H1 (cell line): ENCODE measurements at regions of chr20 and their contacts with region 1.

Region 1: GRCh38 chr20:36835453-36836198 is 40.3 kb upstream of the TLDC2 start:
- DNase-seq: peak; percentile 76 to 87
- H3K4me3 ChIP-seq: peak overlapping the region; percentile 1 to 52 (median 18); a peak in 4 of 8 replicates
- H3K27ac ChIP-seq: peak overlapping the region; percentile 52; the same call in 1 of the 2 replicates
- H3K4me1 ChIP-seq: peaks cover 0 to 7% (median 4%) of the 10 kb centered on the region in 4 experiments; a peak in 4 of 7 replicates
- H3K27me3 ChIP-seq: no peaks in the 10 kb centered on the region
- CTCF ChIP-seq: no peak
- EP300 ChIP-seq: no peak
- POLR2A ChIP-seq: peak in 1 of 2 experiments; percentile 82; a peak in 2 of 3 replicates
- RAD21 ChIP-seq: no peak

Region 2: GRCh38 chr20:36815454-36816091 is 20.1 kb before region 1 on chr20:
- CTCF ChIA-PET with region 1: interaction called, 19 read pairs
- POLR2A ChIA-PET with region 1: interaction called, 3 read pairs
- DNase-seq: no peak
- H3K4me3 ChIP-seq: no peak overlapping the region
- H3K27ac ChIP-seq: no peak overlapping the region
- H3K4me1 ChIP-seq: peaks cover 3 to 6% (median 5%) of the 10 kb centered on the region in 4 experiments; a peak in 5 of 7 replicates
- H3K27me3 ChIP-seq: no peaks in the 10 kb centered on the region
- CTCF ChIP-seq: peak; percentile 27 to 38 (median 37)
- EP300 ChIP-seq: no peak
- POLR2A ChIP-seq: no peak
- RAD21 ChIP-seq: peak; percentile 56 to 62

Region 3: GRCh38 chr20:36847009-36847709 is 11.5 kb after region 1 on chr20:
- CTCF ChIA-PET with region 1: interaction called, 45 read pairs
- POLR2A ChIA-PET with region 1: interaction called, 42 read pairs
- DNase-seq: no peak
- H3K4me3 ChIP-seq: no peak overlapping the region
- H3K27ac ChIP-seq: no peak overlapping the region
- H3K4me1 ChIP-seq: peaks cover 0 to 7% (median 4%) of the 10 kb centered on the region in 4 experiments; a peak in 4 of 7 replicates
- H3K27me3 ChIP-seq: no peaks in the 10 kb centered on the region
- CTCF ChIP-seq: no peak
- EP300 ChIP-seq: no peak
- POLR2A ChIP-seq: no peak
- RAD21 ChIP-seq: no peak

Region 4: DNA sequence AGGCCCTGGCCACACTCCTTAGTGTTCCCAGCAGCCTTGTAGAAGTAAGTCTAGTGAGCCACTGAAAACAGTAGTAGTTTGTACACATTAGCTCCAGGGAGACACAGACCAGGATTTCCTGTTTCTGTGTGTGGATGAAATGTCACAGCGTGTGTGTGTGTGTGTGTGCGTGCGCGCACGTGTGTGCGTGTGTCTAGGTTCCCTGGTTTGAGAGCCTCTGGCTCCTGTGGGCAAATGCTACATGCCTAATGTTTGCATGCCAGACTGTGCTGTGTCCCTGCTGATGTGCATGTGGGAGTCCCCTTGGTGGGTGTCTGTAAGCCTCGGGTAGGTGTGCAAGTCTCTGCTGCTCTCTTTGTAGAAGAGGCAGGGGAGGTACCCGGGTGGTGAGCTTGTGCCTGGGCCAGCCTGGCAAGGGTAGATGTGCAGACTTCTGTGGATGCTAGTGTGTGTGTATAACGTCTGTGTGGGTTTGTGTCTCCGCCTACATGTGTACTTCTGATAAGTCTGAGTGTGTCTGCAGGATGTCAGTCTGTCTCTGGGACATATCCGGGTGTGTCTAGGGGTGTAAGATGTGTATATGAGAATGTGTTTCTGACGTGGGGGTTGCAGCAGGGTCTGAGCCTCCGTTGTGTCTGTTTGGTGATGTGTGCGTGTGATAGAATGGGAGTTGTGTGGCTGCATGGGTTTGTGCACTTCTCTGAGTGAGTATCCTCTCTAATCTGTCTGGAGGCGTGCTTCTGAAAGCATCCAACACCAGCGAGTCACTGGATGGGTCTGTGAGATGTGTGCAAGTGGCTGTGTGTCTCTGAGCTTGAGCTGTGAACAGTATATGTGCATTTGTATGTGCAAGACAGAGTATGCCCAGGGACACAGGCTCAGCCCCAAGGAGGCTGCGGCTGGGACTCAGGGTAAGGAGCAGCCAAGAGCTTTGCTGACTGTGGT is 21.3 kb after region 1 on chr20:
- CTCF ChIA-PET with region 1: interaction called, 35 read pairs
- POLR2A ChIA-PET with region 1: interaction called, 54 read pairs
- DNase-seq: no peak
- H3K4me3 ChIP-seq: no peak overlapping the region
- H3K27ac ChIP-seq: no peak overlapping the region
- H3K4me1 ChIP-seq: peaks cover 0 to 21% (median 16%) of the 10 kb centered on the region in 4 experiments; a peak in 6 of 7 replicates
- H3K27me3 ChIP-seq: peaks cover 0 to 3% (median 1%) of the 10 kb centered on the region in 4 experiments; a peak in 3 of 7 replicates
- CTCF ChIP-seq: no peak
- EP300 ChIP-seq: no peak
- POLR2A ChIP-seq: no peak
- RAD21 ChIP-seq: no peak

Region 5: DNA sequence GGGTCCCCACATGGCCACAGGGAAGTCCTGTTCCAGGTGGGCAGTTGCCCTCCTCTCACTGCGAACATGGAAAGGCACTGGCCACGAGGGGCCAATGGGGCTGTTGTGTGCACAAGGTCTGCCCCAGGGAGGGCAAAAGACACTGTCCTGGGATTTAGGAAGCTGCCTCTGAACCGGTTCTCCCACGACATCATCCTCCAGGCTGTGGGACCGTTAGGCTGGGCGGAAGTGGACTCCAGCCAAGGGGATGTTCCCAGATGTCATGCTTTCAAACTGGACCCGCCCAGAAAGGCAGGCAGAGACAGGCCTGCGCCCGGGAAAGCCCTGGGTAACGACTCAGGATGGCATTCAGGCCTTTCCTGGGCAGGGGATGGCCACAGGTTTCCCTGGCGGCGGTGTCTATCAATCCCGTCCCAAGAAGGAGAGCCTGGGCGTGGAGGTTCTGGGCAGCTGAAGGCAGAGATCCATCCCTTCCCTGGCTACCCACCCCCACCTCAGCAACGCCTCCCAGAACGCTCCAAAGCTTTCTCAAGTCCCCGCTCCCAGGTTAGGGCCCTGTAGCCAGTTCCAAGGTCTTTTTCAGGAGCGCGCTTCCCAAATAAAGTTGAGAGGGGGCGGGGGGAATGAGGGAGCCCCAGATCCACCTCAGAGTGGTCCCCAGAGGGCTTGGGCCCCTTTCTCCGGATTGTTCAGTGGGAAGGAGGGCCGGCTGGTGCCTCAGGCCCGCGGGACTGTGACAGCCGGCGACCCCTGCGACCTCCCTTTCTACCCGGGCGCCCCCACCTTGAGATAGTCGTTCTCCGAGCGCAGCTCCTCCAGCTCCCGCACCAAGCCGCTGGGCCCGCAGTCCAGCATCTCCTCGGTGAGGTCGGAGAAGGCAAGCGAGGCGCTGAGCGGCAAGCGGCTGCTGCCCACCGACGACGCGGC is 26.5 kb after region 1 on chr20:
- CTCF ChIA-PET with region 1: interaction called, 35 read pairs
- POLR2A ChIA-PET with region 1: interaction called, 54 read pairs
- DNase-seq: peak in 1 of 2 experiments; percentile 61
- H3K4me3 ChIP-seq: peak overlapping the region; percentile 44 to 70 (median 50)
- H3K27ac ChIP-seq: no peak overlapping the region
- H3K4me1 ChIP-seq: peaks cover 3 to 23% (median 17%) of the 10 kb centered on the region in 4 experiments
- H3K27me3 ChIP-seq: peaks cover 0 to 10% (median 6%) of the 10 kb centered on the region in 4 experiments; a peak in 4 of 7 replicates
- CTCF ChIP-seq: no peak
- EP300 ChIP-seq: no peak
- POLR2A ChIP-seq: peak in 1 of 2 experiments; percentile 54; a peak in 2 of 3 replicates
- RAD21 ChIP-seq: no peak

Region 6: GRCh38 chr20:36881888-36882287 is 46.3 kb after region 1 on chr20:
- CTCF ChIA-PET with region 1: interaction called, 17 read pairs
- POLR2A ChIA-PET with region 1: interaction called, 3 read pairs
- DNase-seq: no peak
- H3K4me3 ChIP-seq: no peak overlapping the region
- H3K27ac ChIP-seq: no peak overlapping the region
- H3K4me1 ChIP-seq: peaks cover 0 to 5% (median 3%) of the 10 kb centered on the region in 4 experiments; a peak in 5 of 7 replicates
- H3K27me3 ChIP-seq: no peaks in the 10 kb centered on the region; a peak in 1 of 7 replicates
- CTCF ChIP-seq: no peak
- EP300 ChIP-seq: no peak
- POLR2A ChIP-seq: no peak
- RAD21 ChIP-seq: no peak